ENCODE measurements at regions of chr13 and their contacts with region 1.

Region 1: DNA sequence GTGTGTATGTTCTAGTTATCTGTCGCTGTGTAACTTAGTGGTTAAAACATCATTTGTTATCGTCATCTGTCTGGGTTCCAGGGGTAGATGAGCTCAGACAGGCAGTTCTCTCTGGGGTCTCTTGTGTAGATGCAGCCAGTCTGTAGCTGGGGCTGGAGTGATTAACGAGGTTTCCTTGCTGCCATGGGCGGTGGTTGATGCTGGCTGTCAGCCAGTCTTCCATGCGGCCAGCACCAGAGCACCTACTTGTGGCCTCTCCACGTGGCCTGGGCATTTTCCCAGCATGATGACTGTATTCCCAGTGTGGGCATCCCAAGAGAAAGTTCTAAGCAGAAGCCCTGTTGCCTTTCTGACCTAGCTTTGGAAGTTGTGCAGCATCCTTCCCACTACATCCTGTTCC is 10.7 kb downstream of the ERCC5 start:
- DNase-seq: no peak
- H3K4me3 Mint-ChIP-seq: no peak overlapping the region
- H3K27ac Mint-ChIP-seq: no peak overlapping the region
- H3K4me1 Mint-ChIP-seq: peaks cover 18% of the 10 kb centered on the region
- H3K27me3 Mint-ChIP-seq: no peaks in the 10 kb centered on the region

Region 2: GRCh38 chr13:102452831-102453230 is 403.7 kb before region 1 on chr13:
- CTCF ChIA-PET with region 1: no interaction called
- intact Hi-C with region 1: no loop called
- DNase-seq: no peak
- H3K4me3 Mint-ChIP-seq: no peak overlapping the region
- H3K27ac Mint-ChIP-seq: no peak overlapping the region
- H3K4me1 Mint-ChIP-seq: peaks cover 6% of the 10 kb centered on the region
- H3K27me3 Mint-ChIP-seq: peaks cover 2% of the 10 kb centered on the region

Region 3: GRCh38 chr13:102870677-102871415 is 14.3 kb after region 1 on chr13:
- CTCF ChIA-PET with region 1: interaction called, 12 read pairs
- intact Hi-C with region 1: no loop called
- DNase-seq: peak; percentile 56
- H3K4me3 Mint-ChIP-seq: no peak overlapping the region
- H3K27ac Mint-ChIP-seq: no peak overlapping the region
- H3K4me1 Mint-ChIP-seq: peaks cover 22% of the 10 kb centered on the region
- H3K27me3 Mint-ChIP-seq: no peaks in the 10 kb centered on the region

Region 4: DNA sequence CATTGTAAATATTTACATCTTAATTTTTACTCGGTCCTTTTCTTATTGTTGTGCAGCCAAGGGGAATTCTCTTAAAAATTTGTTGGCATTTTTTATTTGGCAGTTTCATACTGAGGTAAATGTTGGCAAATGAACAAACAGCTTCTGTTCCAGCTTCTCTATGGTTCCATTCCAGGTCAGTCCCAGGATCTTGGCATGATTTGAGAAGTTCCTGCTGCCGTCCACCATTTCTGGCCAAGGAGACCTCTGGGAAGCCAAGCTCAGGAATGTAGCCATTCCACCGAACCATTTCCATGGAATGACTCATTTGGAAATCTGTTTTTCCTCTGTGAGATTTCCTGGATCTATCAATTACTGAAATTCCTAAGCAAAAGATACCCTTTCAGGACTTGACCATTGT is 165.8 kb after region 1 on chr13:
- CTCF ChIA-PET with region 1: no interaction called
- intact Hi-C with region 1: no loop called
- DNase-seq: no peak
- H3K4me3 Mint-ChIP-seq: no peak overlapping the region
- H3K27ac Mint-ChIP-seq: no peak overlapping the region
- H3K4me1 Mint-ChIP-seq: no peaks in the 10 kb centered on the region
- H3K27me3 Mint-ChIP-seq: no peaks in the 10 kb centered on the region